ENCODE measurements at regions of chr15 and their contacts with region 1.

Region 1: DNA sequence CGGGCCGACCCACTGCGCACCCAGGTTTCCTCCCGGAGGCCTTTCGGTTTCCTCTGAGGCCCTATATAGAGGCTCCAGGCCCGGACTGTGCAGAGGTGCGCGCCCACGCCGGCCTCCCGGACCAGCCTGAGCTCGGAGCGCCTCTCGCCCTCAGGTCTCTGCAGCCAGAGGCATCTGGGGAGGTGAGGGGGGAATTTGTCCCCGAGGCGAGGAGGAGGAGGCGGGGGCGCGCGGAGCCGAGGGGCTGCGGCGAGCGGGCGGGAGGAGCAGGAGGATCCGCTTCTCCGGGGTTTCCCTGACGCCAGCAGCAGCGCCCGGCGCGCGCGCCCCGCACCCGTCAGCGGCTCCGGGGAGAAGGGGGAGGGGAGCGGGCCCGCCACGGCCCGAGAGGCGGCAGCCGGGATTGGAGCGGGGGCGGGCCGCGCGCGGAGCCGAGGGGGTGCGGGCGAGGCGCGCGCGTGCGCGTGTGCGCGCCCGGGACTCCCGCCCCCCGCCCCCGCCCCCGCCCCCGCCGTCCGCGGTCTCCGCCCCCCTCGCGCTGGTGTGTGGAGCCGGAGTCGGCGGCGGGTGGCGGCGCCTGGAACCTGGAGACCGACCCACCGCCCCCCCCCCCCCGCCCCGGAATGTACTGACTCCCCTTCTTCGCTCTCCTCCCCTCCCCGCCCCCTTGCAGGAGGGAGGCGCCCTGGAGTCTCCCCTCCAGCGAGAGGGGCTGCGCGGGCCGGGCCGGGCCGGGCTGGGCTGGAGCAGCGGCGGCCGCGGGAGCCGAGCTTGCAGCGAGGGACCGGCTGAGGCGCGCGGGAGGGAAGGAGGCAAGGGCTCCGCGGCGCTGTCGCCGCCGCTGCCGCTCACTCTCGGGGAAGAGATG is at the start of gene NEO1:
- DNase-seq: peak; percentile 49 to 90
- H3K4me3 ChIP-seq: peak within 1 kb of the TSS; percentile 84 to 87
- H3K27ac ChIP-seq: peak within 1 kb of the TSS; percentile 89 to 91
- H3K4me1 ChIP-seq: no peaks in the 10 kb centered on the region
- H3K27me3 ChIP-seq: no peaks in the 10 kb centered on the region
- CTCF ChIP-seq: peak in 1 of 3 experiments; percentile 13
- total RNA-seq, gene NEO1: 21.8 TPM

Region 2: DNA sequence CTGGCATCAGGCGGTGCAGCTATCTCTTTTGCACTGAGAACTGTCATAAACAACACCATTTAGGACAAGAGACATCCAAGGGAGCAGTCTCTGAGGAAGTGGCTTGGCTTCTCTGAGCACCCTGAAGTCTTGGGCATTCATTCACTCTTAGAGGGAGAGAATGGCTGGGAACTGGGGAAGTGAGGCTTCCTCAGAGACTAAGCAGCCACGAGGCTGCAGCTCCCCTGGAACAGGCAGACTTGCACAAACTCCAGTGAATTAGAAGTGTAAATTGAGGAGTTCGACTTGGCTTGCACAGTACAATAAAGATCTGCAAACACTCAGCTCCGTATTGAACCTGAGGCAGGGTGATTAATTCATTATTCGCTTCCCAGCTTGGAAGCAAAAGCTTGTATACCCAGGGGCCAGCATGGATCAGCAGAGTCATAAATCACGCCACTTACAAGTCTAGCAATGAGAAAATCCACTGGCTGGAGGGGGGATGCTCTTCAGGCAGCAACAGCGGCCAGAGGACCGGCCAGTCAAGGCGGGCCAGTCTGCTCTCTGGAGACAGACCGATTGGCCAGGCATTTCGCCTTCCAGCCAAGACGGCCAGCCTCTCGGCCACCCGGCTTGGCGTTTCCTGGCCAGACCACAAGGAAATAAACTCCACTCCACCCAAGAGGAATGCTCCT is 149.7 kb before region 1 on chr15:
- intact Hi-C with region 1: loop called (anchors 5 kb)
- DNase-seq: peak; percentile 14 to 89
- H3K4me3 ChIP-seq: peak overlapping the region in 1 of 2 donors; percentile 29
- H3K27ac ChIP-seq: peak overlapping the region; percentile 62 to 72
- H3K4me1 ChIP-seq: peaks cover 5 to 29% of the 10 kb centered on the region in 2 donors
- H3K27me3 ChIP-seq: no peaks in the 10 kb centered on the region
- CTCF ChIP-seq: no peak

Region 3: GRCh38 chr15:72992841-72993252 is 59.2 kb before region 1 on chr15:
- intact Hi-C with region 1: loop called (anchors 1 kb)
- DNase-seq: no peak
- H3K4me3 ChIP-seq: peak overlapping the region in 1 of 2 donors; percentile 17
- H3K27ac ChIP-seq: peak overlapping the region; percentile 76 to 81
- H3K4me1 ChIP-seq: peaks cover 6 to 31% of the 10 kb centered on the region in 2 donors
- H3K27me3 ChIP-seq: no peaks in the 10 kb centered on the region
- CTCF ChIP-seq: no peak

Region 4: GRCh38 chr15:73081321-73081958 is 29.4 kb after region 1 on chr15:
- intact Hi-C with region 1: loop called (anchors 2 kb)
- DNase-seq: no peak
- H3K4me3 ChIP-seq: no peak overlapping the region
- H3K27ac ChIP-seq: no peak overlapping the region
- H3K4me1 ChIP-seq: peaks cover 0 to 26% of the 10 kb centered on the region in 2 donors
- H3K27me3 ChIP-seq: no peaks in the 10 kb centered on the region
- CTCF ChIP-seq: peak; percentile 38 to 81 (median 56)